ENCODE measurements at regions of chr19 and their contacts with region 1.

Region 1: GRCh38 chr19:12139885-12140547 is at the start of gene ZNF20:
- DNase-seq: peak; percentile 95
- H3K4me3 Mint-ChIP-seq: peak within 1 kb of the TSS; percentile 93
- H3K27ac Mint-ChIP-seq: peak within 1 kb of the TSS; percentile 70
- H3K4me1 Mint-ChIP-seq: peaks cover 36% of the 10 kb centered on the region
- H3K27me3 Mint-ChIP-seq: no peaks in the 10 kb centered on the region
- total RNA-seq, gene ZNF20: 1.5 to 2.7 TPM

Region 2: GRCh38 chr19:11881151-11881800 is 258.7 kb before region 1 on chr19:
- CTCF ChIA-PET with region 1: interaction called, 35 read pairs
- POLR2A ChIA-PET with region 1: no interaction called
- intact Hi-C with region 1: loop called (anchors 1 kb)
- DNase-seq: peak; percentile 69
- H3K4me3 Mint-ChIP-seq: no peak overlapping the region
- H3K27ac Mint-ChIP-seq: no peak overlapping the region
- H3K4me1 Mint-ChIP-seq: no peaks in the 10 kb centered on the region
- H3K27me3 Mint-ChIP-seq: no peaks in the 10 kb centered on the region

Region 3: GRCh38 chr19:11924886-11925650 is 214.9 kb before region 1 on chr19 and contains the start of gene ZNF700:
- CTCF ChIA-PET with region 1: interaction called, 61 read pairs
- POLR2A ChIA-PET with region 1: interaction called, 10 read pairs
- intact Hi-C with region 1: loop called (anchors 1 kb)
- DNase-seq: peak; percentile 97
- H3K4me3 Mint-ChIP-seq: peak within 1 kb of the TSS; percentile 96
- H3K27ac Mint-ChIP-seq: peak within 1 kb of the TSS; percentile 99
- H3K4me1 Mint-ChIP-seq: peaks cover 35% of the 10 kb centered on the region
- H3K27me3 Mint-ChIP-seq: no peaks in the 10 kb centered on the region
- total RNA-seq, gene ZNF700: 12.9 to 13.0 TPM

Region 4: DNA sequence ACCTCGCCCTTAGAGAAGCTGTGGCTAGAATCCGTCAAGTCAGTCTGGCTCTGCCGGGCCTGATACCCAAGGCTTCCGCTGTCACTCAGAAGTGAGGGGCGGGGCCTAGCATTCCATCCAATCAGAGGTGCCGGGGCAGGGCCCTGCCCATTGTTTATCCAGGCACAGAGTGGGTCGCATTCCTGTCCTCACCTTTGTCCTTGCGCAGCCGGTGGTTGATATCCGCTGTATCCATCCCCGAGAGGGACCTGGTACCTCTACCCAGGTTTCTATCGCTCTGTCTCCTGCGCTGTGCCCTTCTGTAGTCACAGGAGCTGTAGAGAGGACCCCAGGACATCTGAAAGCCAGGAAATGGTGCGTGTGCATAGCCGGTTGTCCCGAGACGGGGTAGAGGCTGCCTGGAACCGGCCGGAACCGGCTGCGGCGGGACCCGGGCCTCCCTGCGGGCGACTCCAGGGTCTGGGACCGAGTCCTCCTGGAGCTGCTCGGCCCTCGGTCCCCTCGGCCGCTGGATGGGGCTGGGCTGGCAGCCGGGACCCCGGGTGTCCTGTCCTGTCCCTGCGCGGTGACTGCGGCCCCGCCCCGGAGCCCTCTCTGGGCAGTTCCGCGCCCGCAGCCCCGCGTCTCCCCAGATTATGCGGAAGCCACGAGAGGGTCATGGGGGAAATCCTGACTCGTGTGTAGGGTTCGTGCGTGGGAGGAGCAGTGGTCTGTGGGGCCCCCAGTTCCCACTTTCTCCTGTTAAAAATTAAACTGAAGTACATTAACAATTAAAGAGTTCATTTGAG is 175.0 kb before region 1 on chr19 and contains the start of gene ZNF763:
- CTCF ChIA-PET with region 1: interaction called, 28 read pairs
- POLR2A ChIA-PET with region 1: interaction called, 3 read pairs
- intact Hi-C with region 1: loop called (anchors 1 kb)
- DNase-seq: peak; percentile 94
- H3K4me3 Mint-ChIP-seq: peak within 1 kb of the TSS; percentile 88
- H3K27ac Mint-ChIP-seq: peak within 1 kb of the TSS; percentile 79
- H3K4me1 Mint-ChIP-seq: peaks cover 20% of the 10 kb centered on the region
- H3K27me3 Mint-ChIP-seq: no peaks in the 10 kb centered on the region
- total RNA-seq, gene ZNF763: 0.97 to 1.6 TPM

Region 5: GRCh38 chr19:12085074-12085805 is 54.8 kb before region 1 on chr19:
- CTCF ChIA-PET with region 1: interaction called, 106 read pairs
- POLR2A ChIA-PET with region 1: no interaction called
- intact Hi-C with region 1: no loop called
- DNase-seq: no peak
- H3K4me3 Mint-ChIP-seq: no peak overlapping the region
- H3K27ac Mint-ChIP-seq: no peak overlapping the region
- H3K4me1 Mint-ChIP-seq: no peaks in the 10 kb centered on the region
- H3K27me3 Mint-ChIP-seq: no peaks in the 10 kb centered on the region

Region 6: DNA sequence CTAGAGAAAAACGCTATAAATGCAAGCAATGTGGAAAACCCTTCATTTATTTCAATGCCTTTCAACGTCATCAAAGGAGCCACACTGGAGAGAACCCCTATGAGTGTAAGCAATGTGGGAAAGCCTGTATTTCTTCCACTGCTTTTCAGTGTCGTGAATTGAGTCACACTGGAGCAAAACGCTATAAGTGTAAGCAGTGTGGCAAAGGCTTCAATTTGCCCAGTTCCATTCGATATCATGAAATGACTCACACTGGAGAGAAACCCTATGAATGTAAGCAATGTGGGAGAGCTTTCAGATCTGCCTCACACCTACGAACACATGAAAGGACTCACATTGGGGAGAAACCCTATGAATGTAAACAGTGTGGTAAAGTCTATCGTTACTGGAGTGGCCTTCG is 27.3 kb before region 1 on chr19:
- CTCF ChIA-PET with region 1: interaction called, 4 read pairs
- POLR2A ChIA-PET with region 1: no interaction called
- intact Hi-C with region 1: loop called (anchors 1 kb)
- DNase-seq: peak; percentile 36
- H3K4me3 Mint-ChIP-seq: no peak overlapping the region
- H3K27ac Mint-ChIP-seq: no peak overlapping the region
- H3K4me1 Mint-ChIP-seq: peaks cover 28% of the 10 kb centered on the region
- H3K27me3 Mint-ChIP-seq: peaks cover 2% of the 10 kb centered on the region

Region 7: DNA sequence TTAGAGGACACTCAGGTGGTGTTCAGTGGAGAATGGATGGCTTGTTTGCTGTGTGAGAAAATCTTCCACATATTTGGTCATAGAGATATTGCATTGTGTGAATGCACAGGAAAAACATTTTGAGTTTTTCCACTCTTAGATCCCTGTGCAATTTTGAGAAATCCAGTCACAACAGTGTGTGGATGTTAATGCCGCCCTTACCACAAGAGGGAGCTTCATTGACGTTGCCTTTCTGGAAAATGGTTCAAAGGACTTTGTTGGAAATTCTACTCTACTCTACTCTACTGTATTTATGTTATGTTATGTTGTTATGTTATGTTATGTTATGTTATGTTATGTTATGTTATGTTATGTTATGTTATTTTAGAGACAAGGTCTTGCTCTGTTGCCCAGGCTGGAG is 13.3 kb before region 1 on chr19:
- CTCF ChIA-PET with region 1: interaction called, 11 read pairs
- POLR2A ChIA-PET with region 1: no interaction called
- intact Hi-C with region 1: no loop called
- DNase-seq: no peak
- H3K4me3 Mint-ChIP-seq: no peak overlapping the region
- H3K27ac Mint-ChIP-seq: no peak overlapping the region
- H3K4me1 Mint-ChIP-seq: no peaks in the 10 kb centered on the region
- H3K27me3 Mint-ChIP-seq: no peaks in the 10 kb centered on the region

Measured in activated CD4-positive, alpha-beta memory T cell treated with anti-CD3 and anti-CD28 coated beads for 36 hours (primary cell).